Activated CD8-positive, alpha-beta T cell treated with anti-CD3 and anti-CD28 coated beads for 36 hours (primary cell): ENCODE measurements at regions of chr12 and their contacts with region 1.

Region 1: GRCh38 chr12:751192-751998 is 984 bp upstream of the WNK1 start:
- DNase-seq: peak; percentile 96
- ATAC-seq: peak; percentile 57
- H3K4me3 Mint-ChIP-seq: no peak overlapping the region
- H3K27ac Mint-ChIP-seq: no peak overlapping the region
- H3K4me1 Mint-ChIP-seq: peaks cover 22% of the 10 kb centered on the region
- H3K27me3 Mint-ChIP-seq: no peaks in the 10 kb centered on the region
- CTCF ChIP-seq: peak; percentile 71

Region 2: DNA sequence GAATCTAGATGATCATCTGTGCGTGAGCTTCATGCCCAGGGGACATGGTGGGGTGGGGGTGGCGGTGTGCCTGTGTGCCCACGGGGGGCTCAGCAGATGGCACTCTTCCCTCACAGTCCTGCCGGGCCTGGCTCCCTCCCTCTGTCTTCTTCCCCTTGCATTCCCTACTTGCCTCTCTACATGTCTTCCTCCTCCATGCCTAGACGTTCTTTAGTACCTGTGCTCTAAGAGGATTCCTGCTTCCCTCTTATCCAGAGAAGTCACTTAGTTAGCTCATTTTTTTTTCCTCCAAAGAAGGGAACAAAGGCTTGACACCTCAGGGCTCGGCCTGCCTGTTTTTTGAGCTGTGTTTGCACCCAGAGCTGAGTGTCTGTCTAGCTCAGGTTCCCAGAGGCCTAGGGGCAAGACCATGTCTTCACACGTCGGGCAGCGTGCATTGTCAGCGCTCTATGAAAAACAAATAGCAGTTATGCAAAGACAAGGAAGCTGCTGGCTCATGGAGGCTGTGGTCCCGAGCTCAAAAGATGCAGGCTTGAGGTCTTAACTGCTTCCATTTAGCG is 136.9 kb before region 1 on chr12:
- CTCF ChIA-PET with region 1: interaction called, 37 read pairs
- POLR2A ChIA-PET with region 1: interaction called, 7 read pairs
- intact Hi-C with region 1: no loop called
- DNase-seq: peak; percentile 66
- ATAC-seq: peak; percentile 55
- H3K4me3 Mint-ChIP-seq: no peak overlapping the region
- H3K27ac Mint-ChIP-seq: no peak overlapping the region
- H3K4me1 Mint-ChIP-seq: peaks cover 35% of the 10 kb centered on the region
- H3K27me3 Mint-ChIP-seq: no peaks in the 10 kb centered on the region
- CTCF ChIP-seq: peak; percentile 47

Region 3: DNA sequence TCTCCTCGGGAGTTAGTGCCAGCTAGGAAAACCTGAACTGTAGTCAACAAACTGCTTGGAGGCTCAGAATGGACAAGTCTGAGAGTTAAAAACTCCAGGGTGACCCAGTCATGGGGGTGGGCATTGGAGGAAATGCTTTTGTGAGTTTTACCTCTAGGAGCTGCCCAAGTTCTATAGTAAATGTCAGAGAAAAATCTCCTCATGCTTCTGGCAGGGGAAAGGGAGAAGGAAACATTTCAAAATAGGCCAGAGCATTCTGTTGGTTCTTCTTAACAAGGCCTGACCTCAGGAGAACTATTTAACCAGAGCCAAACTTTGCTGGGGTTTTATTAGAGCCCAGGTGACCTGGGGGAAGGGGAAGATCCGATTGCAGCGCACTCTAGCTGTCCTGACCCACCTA is 100.4 kb before region 1 on chr12:
- CTCF ChIA-PET with region 1: interaction called, 17 read pairs
- POLR2A ChIA-PET with region 1: interaction called, 4 read pairs
- intact Hi-C with region 1: no loop called
- DNase-seq: no peak
- ATAC-seq: no peak
- H3K4me3 Mint-ChIP-seq: no peak overlapping the region
- H3K27ac Mint-ChIP-seq: no peak overlapping the region
- H3K4me1 Mint-ChIP-seq: peaks cover 14% of the 10 kb centered on the region
- H3K27me3 Mint-ChIP-seq: no peaks in the 10 kb centered on the region
- CTCF ChIP-seq: no peak

Region 4: GRCh38 chr12:685388-685787 is 66.0 kb before region 1 on chr12:
- CTCF ChIA-PET with region 1: interaction called, 23 read pairs
- POLR2A ChIA-PET with region 1: interaction called, 8 read pairs
- intact Hi-C with region 1: no loop called
- DNase-seq: peak; percentile 95
- ATAC-seq: peak; percentile 91
- H3K4me3 Mint-ChIP-seq: peak overlapping the region; percentile 24
- H3K27ac Mint-ChIP-seq: peak overlapping the region; percentile 83
- H3K4me1 Mint-ChIP-seq: peaks cover 31% of the 10 kb centered on the region
- H3K27me3 Mint-ChIP-seq: no peaks in the 10 kb centered on the region
- CTCF ChIP-seq: no peak

Region 5: DNA sequence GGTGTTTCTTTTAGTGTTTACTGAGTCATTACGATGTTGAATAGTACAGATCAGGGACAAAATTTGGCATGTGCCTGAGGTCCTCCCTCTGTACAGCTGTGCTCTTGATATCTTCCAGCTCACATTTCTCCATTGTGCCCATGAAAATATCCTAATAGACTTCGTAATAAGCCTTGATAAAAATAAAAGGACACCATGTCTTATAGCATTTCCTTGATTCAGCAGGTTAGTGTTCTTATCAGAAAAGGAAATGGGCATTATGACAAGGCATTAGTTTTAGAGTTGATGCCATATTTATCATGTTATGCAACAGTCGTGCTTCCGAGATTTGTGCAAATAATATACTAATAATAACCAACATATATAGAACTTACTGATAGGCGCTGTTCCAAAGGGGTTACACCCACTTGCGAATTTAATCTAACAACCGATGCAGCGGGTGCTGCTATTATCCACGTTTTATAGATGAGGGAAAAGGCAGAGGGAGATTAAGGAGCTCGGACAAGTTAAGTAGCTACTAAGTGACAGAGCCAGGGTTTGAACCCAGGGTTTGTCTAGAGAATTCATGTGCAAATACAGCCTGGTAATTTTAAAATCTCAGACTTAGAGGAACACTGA is 14.2 kb before region 1 on chr12:
- CTCF ChIA-PET with region 1: interaction called, 28 read pairs
- POLR2A ChIA-PET with region 1: interaction called, 7 read pairs
- intact Hi-C with region 1: no loop called
- DNase-seq: no peak
- ATAC-seq: no peak
- H3K4me3 Mint-ChIP-seq: no peak overlapping the region
- H3K27ac Mint-ChIP-seq: no peak overlapping the region
- H3K4me1 Mint-ChIP-seq: peaks cover 17% of the 10 kb centered on the region
- H3K27me3 Mint-ChIP-seq: no peaks in the 10 kb centered on the region
- CTCF ChIP-seq: no peak

Region 6: GRCh38 chr12:810671-811415 is 59.4 kb after region 1 on chr12:
- CTCF ChIA-PET with region 1: interaction called, 107 read pairs
- POLR2A ChIA-PET with region 1: interaction called, 10 read pairs
- intact Hi-C with region 1: loop called (anchors 2 kb)
- DNase-seq: peak; percentile 79
- ATAC-seq: peak; percentile 85
- H3K4me3 Mint-ChIP-seq: peak overlapping the region; percentile 5
- H3K27ac Mint-ChIP-seq: peak overlapping the region; percentile 76
- H3K4me1 Mint-ChIP-seq: peaks cover 67% of the 10 kb centered on the region
- H3K27me3 Mint-ChIP-seq: no peaks in the 10 kb centered on the region
- CTCF ChIP-seq: no peak